Activated B cell treated with CpG ODN at 0.5 μM for 24 hours (primary cell): ENCODE measurements at regions of chr20 and their contacts with region 1.

Region 1: GRCh38 chr20:63537525-63538203 is 488 bp upstream of the PTK6 start:
- DNase-seq: peak; percentile 93
- ATAC-seq: peak; percentile 86
- H3K4me3 Mint-ChIP-seq: peak overlapping the region; percentile 80
- H3K27ac Mint-ChIP-seq: peak overlapping the region; percentile 80
- H3K4me1 Mint-ChIP-seq: peaks cover 27% of the 10 kb centered on the region
- H3K27me3 Mint-ChIP-seq: no peaks in the 10 kb centered on the region
- CTCF ChIP-seq: peak; percentile 23

Region 2: GRCh38 chr20:63495741-63496595 is 41.7 kb before region 1 on chr20:
- CTCF ChIA-PET with region 1: interaction called, 3 read pairs
- POLR2A ChIA-PET with region 1: interaction called, 5 read pairs
- intact Hi-C with region 1: loop called (anchors 1 kb)
- DNase-seq: peak; percentile 73
- ATAC-seq: peak; percentile 74
- H3K4me3 Mint-ChIP-seq: peak overlapping the region; percentile 59
- H3K27ac Mint-ChIP-seq: no peak overlapping the region
- H3K4me1 Mint-ChIP-seq: peaks cover 4% of the 10 kb centered on the region
- H3K27me3 Mint-ChIP-seq: peaks cover 9% of the 10 kb centered on the region
- CTCF ChIP-seq: peak; percentile 58

Region 3: GRCh38 chr20:63574156-63574828 is 36.6 kb after region 1 on chr20 and contains the start of gene HELZ2:
- CTCF ChIA-PET with region 1: interaction called, 12 read pairs
- POLR2A ChIA-PET with region 1: interaction called, 23 read pairs
- intact Hi-C with region 1: no loop called
- DNase-seq: peak; percentile 55
- ATAC-seq: peak; percentile 95
- H3K4me3 Mint-ChIP-seq: peak within 1 kb of the TSS; percentile 83
- H3K27ac Mint-ChIP-seq: peak within 1 kb of the TSS; percentile 70
- H3K4me1 Mint-ChIP-seq: peaks cover 12% of the 10 kb centered on the region
- H3K27me3 Mint-ChIP-seq: peaks cover 2% of the 10 kb centered on the region
- CTCF ChIP-seq: no peak
- total RNA-seq, gene HELZ2: 25.4 and 28.9 TPM in 2 replicates

Region 4: DNA sequence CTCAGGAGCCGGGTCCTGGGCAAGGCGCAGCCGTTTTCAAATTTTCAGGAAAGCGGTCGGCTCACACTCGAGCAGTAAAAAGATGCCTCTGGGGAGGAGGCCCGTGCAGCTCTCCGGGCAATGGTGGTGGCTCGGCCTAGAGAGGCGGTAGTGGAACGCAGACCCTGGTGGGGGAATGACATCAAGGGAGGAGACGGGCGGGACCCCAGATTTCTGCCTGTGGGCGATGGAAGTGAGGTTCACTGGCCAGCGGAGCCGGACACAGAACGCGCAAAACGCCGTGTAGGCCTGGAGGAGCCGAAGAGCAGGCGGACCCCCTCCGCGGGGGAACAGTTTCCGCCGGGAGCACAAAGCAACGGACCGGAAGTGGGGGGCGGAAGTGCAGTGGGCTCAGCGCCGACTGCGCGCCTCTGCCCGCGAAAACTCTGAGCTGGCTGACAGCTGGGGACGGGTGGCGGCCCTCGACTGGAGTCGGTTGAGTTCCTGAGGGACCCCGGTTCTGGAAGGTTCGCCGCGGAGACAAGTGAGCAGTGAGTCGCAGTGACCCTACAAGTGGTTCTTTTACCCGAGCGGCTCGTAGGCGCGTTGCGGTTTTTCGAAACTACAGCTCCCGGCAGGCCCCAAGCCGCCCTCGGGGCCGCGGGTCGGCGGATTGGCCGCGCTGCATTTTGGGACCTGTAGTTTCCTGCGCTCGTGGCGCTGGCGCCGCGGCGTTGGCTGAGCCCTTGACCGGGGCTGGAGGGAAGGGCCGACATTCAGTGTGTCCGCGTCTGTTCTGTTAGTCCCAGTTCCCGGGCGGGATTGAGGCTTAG is 120.5 kb after region 1 on chr20 and contains the start of gene RTEL1:
- CTCF ChIA-PET with region 1: interaction called, 4 read pairs
- POLR2A ChIA-PET with region 1: interaction called, 14 read pairs
- intact Hi-C with region 1: loop called (anchors 1 kb)
- DNase-seq: peak; percentile 95
- ATAC-seq: peak; percentile 88
- H3K4me3 Mint-ChIP-seq: peak within 1 kb of the TSS; percentile 97
- H3K27ac Mint-ChIP-seq: peak within 1 kb of the TSS; percentile 93
- H3K4me1 Mint-ChIP-seq: peaks cover 27% of the 10 kb centered on the region
- H3K27me3 Mint-ChIP-seq: peaks cover 3% of the 10 kb centered on the region
- CTCF ChIP-seq: no peak
- total RNA-seq, gene RTEL1: 24.1 and 33.8 TPM in 2 replicates

Region 5: DNA sequence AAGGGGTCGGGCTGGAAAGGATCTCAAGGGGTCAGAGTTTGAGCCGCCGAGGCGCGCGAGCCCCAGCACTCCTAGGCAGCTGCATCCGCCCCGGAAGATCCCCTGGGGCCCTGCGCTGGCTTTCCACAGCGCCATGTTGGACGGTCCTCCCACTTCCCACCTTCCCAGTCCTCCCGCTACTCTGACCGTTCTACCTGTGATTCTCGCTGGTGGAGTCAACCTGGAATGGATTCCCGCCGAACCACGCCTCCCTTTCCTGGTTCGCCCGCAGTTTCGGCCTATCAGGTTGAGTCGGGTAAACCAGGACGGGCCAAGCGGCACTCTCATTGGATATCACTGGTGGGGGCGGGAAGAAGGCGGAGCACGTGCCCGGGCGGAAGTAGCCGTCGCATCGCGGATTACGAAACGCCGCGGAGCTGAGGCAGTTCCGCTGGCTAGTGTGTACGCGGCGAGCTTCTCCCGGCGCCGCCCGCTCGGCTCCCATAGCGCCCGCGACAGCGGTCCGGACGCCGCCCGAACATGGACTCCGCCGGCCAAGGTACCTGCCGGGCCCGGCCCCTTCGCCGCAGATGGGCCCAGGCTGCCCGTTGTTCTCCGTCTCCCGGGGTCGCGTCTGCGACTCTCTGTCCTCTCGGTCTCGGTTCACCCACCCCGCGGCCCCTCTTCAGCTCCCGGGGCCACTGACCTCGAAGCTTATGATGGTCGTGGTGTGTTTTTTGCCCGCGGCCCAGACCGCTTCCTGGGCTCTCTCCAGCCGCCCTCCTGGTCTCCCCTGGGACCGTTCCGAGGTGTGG is 327.4 kb after region 1 on chr20 and contains the start of gene TPD52L2:
- CTCF ChIA-PET with region 1: interaction called, 23 read pairs
- POLR2A ChIA-PET with region 1: interaction called, 47 read pairs
- intact Hi-C with region 1: loop called (anchors 1 kb)
- DNase-seq: peak; percentile 93
- ATAC-seq: peak; percentile 82
- H3K4me3 Mint-ChIP-seq: peak within 1 kb of the TSS; percentile 99
- H3K27ac Mint-ChIP-seq: peak within 1 kb of the TSS; percentile 99
- H3K4me1 Mint-ChIP-seq: peaks cover 33% of the 10 kb centered on the region
- H3K27me3 Mint-ChIP-seq: no peaks in the 10 kb centered on the region
- CTCF ChIP-seq: no peak
- total RNA-seq, gene TPD52L2: 36.7 and 38.8 TPM in 2 replicates

Region 6: DNA sequence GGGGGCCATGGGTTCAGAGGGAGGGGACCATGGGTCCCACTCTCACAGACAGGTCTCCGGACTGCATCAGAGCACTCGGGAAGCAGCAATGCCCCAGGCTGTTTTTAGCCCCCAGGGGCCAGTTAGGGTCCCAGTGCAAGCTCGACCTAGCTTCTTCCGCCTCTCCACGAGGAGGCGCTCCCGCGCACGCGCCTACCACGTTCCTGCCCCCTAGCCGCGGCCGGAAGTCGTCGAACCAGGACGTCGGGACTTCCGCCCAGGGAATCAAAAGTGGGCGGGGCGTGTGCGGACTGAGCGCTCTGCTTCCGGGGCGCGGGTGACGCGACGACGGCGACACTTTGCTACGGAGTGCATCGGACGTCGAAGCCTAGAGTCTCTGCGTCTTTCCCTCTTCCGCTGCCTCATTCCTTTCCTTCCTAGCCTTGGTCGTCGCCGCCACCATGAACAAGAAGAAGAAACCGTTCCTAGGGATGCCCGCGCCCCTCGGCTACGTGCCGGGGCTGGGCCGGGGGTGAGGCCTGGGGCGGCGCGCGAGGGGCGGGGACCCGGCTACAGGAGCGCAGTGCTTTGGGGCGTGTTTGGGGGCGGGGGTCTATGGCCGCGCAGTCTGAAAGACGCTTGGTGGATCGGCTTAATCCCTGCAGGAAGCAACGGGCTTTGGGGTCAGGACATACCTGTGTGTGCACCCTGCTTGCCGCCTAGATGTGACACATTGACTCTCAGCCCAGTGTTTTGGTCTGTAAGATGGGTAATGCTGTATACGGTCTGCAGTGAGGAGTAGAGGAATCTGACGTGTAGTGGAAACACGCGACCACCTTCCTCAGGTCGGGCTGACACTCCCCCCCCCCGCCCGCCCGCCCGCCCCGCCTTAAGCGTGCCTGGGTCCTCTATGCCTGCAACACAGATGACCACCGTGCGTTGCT is 443.4 kb after region 1 on chr20 and contains the start of gene PRPF6:
- CTCF ChIA-PET with region 1: interaction called, 8 read pairs
- POLR2A ChIA-PET with region 1: interaction called, 10 read pairs
- intact Hi-C with region 1: no loop called
- DNase-seq: peak; percentile 90
- ATAC-seq: peak; percentile 65
- H3K4me3 Mint-ChIP-seq: peak within 1 kb of the TSS; percentile 92
- H3K27ac Mint-ChIP-seq: peak within 1 kb of the TSS; percentile 94
- H3K4me1 Mint-ChIP-seq: peaks cover 50% of the 10 kb centered on the region
- H3K27me3 Mint-ChIP-seq: no peaks in the 10 kb centered on the region
- CTCF ChIP-seq: peak; percentile 25
- total RNA-seq, gene PRPF6: 75.7 and 75.8 TPM in 2 replicates